ENCODE measurements at regions of chr15 and their contacts with region 1.

Region 1: GRCh38 chr15:90886041-90886614 is 1.8 kb downstream of the FES start:
- DNase-seq: peak; percentile 70 to 93
- H3K4me3 ChIP-seq: no peak overlapping the region
- H3K4me1 ChIP-seq: peaks cover 14% of the 10 kb centered on the region
- H3K27me3 ChIP-seq: no peaks in the 10 kb centered on the region

Region 2: GRCh38 chr15:90320061-90320884 is 565.9 kb before region 1 on chr15:
- in situ Hi-C with region 1: loop called (anchors 10 kb)
- DNase-seq: peak; percentile 88 to 90
- H3K4me3 ChIP-seq: no peak overlapping the region
- H3K4me1 ChIP-seq: peaks cover 13% of the 10 kb centered on the region
- H3K27me3 ChIP-seq: no peaks in the 10 kb centered on the region

Region 3: GRCh38 chr15:90482124-90483011 is 403.8 kb before region 1 on chr15:
- in situ Hi-C with region 1: loop called (anchors 25 kb)
- DNase-seq: peak; percentile 61 to 62
- H3K4me3 ChIP-seq: no peak overlapping the region
- H3K4me1 ChIP-seq: no peaks in the 10 kb centered on the region
- H3K27me3 ChIP-seq: no peaks in the 10 kb centered on the region

Region 4: DNA sequence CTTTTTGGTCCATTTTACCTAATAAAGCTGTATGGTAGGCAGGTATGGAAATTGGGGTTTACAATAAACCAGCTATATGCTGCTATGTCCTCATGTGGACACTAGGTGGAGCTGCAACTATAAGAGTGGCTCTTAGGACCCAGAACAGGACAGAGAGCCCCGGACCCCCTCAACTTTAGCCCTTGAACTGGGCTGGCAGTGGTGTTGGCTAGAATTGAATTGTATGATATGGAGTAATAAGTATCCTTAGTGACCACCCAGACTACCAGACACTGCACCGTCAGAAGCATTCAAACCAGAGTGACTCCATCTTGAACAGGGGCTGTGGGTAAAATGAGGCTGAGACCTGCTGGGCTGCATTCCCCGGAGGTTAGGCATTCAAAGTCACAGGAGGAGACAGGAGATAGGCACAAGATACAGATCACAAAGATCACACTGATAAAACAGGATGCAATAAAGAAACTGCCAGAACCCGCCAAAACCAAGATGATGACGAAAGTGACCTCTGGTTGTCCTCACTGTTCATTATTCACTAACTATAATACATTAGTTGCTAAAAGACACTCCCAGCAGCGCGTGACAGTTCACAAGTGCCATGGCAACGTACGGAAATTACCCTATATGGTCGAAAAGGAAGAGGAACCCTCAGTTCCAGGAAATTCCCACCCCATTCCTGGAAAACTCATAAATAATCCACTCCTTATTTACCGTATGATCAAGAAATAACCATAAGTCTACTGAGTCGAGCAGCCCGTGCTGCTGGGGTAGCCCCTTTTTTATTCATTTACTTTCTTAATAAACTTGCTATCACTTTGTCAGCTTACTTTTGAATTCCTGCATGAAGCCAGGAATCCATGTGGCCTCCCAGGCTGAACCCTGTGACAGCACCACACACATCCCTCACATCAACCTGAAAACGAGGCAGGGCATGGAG is 237.7 kb before region 1 on chr15:
- in situ Hi-C with region 1: loop called (anchors 5 kb)
- DNase-seq: peak; percentile 63 to 77
- H3K4me3 ChIP-seq: no peak overlapping the region
- H3K4me1 ChIP-seq: peaks cover 5% of the 10 kb centered on the region; the same call in 1 of the 2 replicates
- H3K27me3 ChIP-seq: no peaks in the 10 kb centered on the region

Measured in HAP-1 (cell line).